ENCODE measurements at regions of chr12 and their contacts with region 1.

Region 1: DNA sequence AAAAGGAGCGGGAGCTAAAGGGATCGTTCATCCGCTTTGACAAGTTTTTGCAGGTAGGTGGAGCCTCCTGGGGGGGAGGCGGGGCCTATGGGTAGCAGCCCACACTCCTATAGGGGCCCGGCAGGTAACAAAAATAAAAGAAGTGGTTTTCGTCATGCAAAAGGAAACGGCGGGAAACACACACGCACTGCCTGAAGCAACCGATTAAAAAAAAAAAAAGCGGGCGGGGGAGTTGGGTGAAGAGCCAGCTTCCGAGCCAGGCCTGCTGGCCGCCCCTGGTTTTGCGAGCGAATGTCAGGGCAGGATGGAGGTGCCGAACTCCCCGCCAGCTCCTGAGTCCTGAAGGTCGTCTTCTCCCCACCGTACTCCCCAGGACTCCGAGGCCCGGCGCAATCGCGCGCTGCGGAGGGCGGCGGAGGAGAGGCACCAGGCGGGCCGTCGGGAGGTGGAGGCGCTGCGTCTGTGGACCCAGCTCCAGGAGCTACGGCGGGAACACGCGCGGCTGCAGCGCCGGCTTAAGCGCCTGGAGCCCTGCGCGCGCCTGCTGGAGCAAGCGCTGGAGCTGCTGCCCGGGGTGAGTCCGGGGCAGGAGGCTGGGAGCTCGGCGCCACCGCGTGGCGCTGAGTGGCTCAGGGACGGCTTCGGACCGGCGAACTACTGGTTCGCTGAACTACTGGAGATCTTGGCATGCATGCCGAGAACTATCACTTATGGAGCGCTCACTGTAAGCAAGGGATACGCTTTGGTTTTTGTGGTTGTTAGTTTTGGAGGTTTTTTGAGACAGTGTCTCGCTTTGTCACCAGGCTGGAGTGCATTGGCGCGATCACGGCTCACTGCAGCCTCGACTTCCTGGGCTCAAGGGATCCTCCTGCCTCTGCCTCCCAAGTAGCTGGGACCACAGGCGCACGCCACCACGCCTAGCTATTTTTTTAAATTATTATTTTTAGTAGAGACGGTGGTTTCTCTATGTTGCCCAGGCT is 3.6 kb downstream of the CFAP73 start:
- DNase-seq: peak; percentile 34 to 88 (median 63)
- ATAC-seq: peak; percentile 94
- H3K4me3 ChIP-seq: peak overlapping the region; percentile 53
- H3K4me3 Mint-ChIP-seq: peak overlapping the region; percentile 89
- H3K27ac ChIP-seq: no peak overlapping the region
- H3K27ac Mint-ChIP-seq: peak overlapping the region; percentile 84
- H3K4me1 ChIP-seq: peaks cover 34% of the 10 kb centered on the region
- H3K4me1 Mint-ChIP-seq: peaks cover 29% of the 10 kb centered on the region
- H3K27me3 ChIP-seq: peaks cover 0 to 2% of the 10 kb centered on the region in 2 experiments
- H3K27me3 Mint-ChIP-seq: no peaks in the 10 kb centered on the region
- CTCF ChIP-seq: no peak

Region 2: DNA sequence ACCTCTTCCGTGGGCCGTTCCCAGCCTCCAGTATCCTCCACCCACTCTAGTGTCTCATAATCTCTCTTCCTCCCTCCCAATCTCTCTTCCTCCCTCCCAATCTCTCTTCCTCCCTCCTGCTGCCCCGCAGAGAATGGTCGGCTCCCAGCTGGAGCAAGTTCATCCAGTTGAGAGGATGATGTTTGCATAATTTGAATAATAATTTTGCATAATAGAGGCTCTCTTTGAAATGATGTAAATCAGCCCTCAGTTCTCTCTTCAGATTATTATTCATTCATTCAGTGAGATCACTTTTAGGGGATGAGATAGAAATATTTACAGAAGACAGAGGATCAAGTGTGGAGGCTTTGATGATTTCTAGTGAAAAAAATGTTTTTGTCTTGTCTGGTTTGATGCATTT is 609.4 kb before region 1 on chr12:
- CTCF ChIA-PET with region 1: no interaction called
- POLR2A ChIA-PET with region 1: no interaction called
- intact Hi-C with region 1: no loop called
- DNase-seq: no peak
- ATAC-seq: no peak
- H3K4me3 ChIP-seq: no peak overlapping the region
- H3K4me3 Mint-ChIP-seq: no peak overlapping the region
- H3K27ac ChIP-seq: no peak overlapping the region
- H3K27ac Mint-ChIP-seq: no peak overlapping the region
- H3K4me1 ChIP-seq: no peaks in the 10 kb centered on the region
- H3K4me1 Mint-ChIP-seq: no peaks in the 10 kb centered on the region
- H3K27me3 ChIP-seq: peaks cover 0 to 4% of the 10 kb centered on the region in 2 experiments
- H3K27me3 Mint-ChIP-seq: peaks cover 23% of the 10 kb centered on the region
- CTCF ChIP-seq: no peak

Region 3: GRCh38 chr12:113016796-113017195 is 136.3 kb before region 1 on chr12:
- CTCF ChIA-PET with region 1: no interaction called
- POLR2A ChIA-PET with region 1: no interaction called
- intact Hi-C with region 1: no loop called
- DNase-seq: no peak
- ATAC-seq: no peak
- H3K4me3 ChIP-seq: no peak overlapping the region
- H3K4me3 Mint-ChIP-seq: no peak overlapping the region
- H3K27ac ChIP-seq: no peak overlapping the region
- H3K27ac Mint-ChIP-seq: no peak overlapping the region
- H3K4me1 ChIP-seq: no peaks in the 10 kb centered on the region
- H3K4me1 Mint-ChIP-seq: no peaks in the 10 kb centered on the region
- H3K27me3 ChIP-seq: no peaks in the 10 kb centered on the region
- H3K27me3 Mint-ChIP-seq: no peaks in the 10 kb centered on the region
- CTCF ChIP-seq: no peak

Region 4: GRCh38 chr12:113048716-113049127 is 104.4 kb before region 1 on chr12:
- CTCF ChIA-PET with region 1: interaction called, 8 read pairs
- POLR2A ChIA-PET with region 1: interaction called, 3 read pairs
- intact Hi-C with region 1: loop called (anchors 2 to 10 kb)
- DNase-seq: peak; percentile 33 to 84 (median 52)
- ATAC-seq: peak; percentile 85
- H3K4me3 ChIP-seq: no peak overlapping the region
- H3K4me3 Mint-ChIP-seq: peak overlapping the region; percentile 51
- H3K27ac ChIP-seq: no peak overlapping the region
- H3K27ac Mint-ChIP-seq: no peak overlapping the region
- H3K4me1 ChIP-seq: peaks cover 14% of the 10 kb centered on the region
- H3K4me1 Mint-ChIP-seq: peaks cover 51% of the 10 kb centered on the region
- H3K27me3 ChIP-seq: no peaks in the 10 kb centered on the region
- H3K27me3 Mint-ChIP-seq: no peaks in the 10 kb centered on the region
- CTCF ChIP-seq: peak; percentile 75

Region 5: DNA sequence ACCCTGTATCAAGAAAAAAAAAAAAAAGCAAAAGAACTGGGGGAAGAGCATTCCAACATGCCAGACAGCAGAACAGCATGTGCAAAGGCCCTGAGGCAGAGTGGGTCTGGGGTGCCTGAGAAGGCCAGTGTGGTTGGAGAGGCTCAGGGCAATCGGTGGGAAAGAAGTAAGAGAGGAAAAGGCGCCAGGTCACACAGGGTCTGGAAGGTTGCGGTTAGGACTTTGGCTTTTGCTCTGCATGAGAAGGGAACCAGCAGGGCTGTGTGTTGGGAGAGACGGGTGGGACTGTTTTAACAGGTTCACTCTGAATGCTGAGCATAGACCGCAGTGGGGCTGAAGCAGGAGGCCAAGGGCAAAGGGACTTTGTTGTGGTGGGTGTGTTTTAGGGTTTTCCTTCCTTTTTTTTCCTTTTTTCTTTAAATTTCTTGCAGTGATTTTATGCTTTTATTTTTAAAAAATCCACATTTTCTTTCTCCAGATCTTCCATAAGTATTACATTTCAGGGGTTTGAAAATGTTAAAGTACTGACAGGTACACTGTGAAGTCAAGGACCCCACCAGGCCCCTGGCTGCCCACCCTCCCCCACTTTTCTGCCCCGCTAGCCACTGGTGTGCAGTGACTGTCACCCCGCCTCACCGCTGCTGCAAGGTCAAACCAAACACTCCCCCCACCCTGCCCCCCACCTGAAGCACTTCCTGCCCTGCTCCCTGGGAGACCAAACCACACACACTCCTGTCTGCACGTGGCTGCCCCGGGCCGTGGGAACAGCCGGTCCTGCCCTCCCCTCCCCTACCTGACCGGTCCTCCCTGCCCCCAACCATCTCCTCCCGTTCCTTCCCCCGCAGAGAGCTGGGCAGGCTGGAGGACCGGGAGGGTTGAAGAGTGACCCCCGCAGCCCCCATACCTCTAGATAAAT is 66.6 kb before region 1 on chr12:
- CTCF ChIA-PET with region 1: no interaction called
- POLR2A ChIA-PET with region 1: no interaction called
- intact Hi-C with region 1: loop called in 1 of 2 experiments (anchors 10 kb)
- DNase-seq: peak in 10 of 14 experiments; percentile 20 to 69 (median 40)
- ATAC-seq: peak; percentile 41
- H3K4me3 ChIP-seq: no peak overlapping the region
- H3K4me3 Mint-ChIP-seq: peak overlapping the region; percentile 82
- H3K27ac ChIP-seq: peak overlapping the region; percentile 42 to 62
- H3K27ac Mint-ChIP-seq: peak overlapping the region; percentile 66
- H3K4me1 ChIP-seq: peaks cover 81% of the 10 kb centered on the region
- H3K4me1 Mint-ChIP-seq: peaks cover 93% of the 10 kb centered on the region
- H3K27me3 ChIP-seq: no peaks in the 10 kb centered on the region
- H3K27me3 Mint-ChIP-seq: no peaks in the 10 kb centered on the region
- CTCF ChIP-seq: no peak

Region 6: DNA sequence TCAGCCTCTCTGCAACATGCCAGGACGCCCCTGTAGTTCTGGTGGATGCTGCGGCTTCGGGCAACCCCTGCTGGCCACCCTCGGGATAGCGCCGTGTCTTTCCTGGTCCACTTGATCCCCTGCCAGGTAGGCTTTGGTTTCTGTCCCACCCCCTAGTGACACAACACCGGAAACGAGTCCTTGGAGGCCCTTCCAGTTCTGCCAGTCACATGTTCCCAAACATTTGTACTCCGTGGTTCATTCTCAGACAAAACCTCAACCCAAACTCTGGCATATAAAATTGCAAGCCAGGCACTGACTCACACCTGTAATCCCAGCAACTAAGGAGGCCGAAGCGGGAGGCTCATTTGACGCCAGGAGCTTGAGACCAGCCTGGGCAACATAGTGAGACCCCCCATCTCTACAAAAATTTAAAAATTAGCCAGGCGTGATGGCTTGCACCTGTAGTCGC is 54.7 kb before region 1 on chr12:
- CTCF ChIA-PET with region 1: no interaction called
- POLR2A ChIA-PET with region 1: no interaction called
- intact Hi-C with region 1: loop called (anchors 1 to 5 kb)
- DNase-seq: peak; percentile 46 to 82 (median 62)
- ATAC-seq: peak; percentile 94
- H3K4me3 ChIP-seq: no peak overlapping the region
- H3K4me3 Mint-ChIP-seq: no peak overlapping the region
- H3K27ac ChIP-seq: no peak overlapping the region
- H3K27ac Mint-ChIP-seq: peak overlapping the region; percentile 45
- H3K4me1 ChIP-seq: peaks cover 38% of the 10 kb centered on the region
- H3K4me1 Mint-ChIP-seq: peaks cover 39% of the 10 kb centered on the region
- H3K27me3 ChIP-seq: no peaks in the 10 kb centered on the region
- H3K27me3 Mint-ChIP-seq: no peaks in the 10 kb centered on the region
- CTCF ChIP-seq: peak; percentile 87

Region 7: GRCh38 chr12:113103756-113104450 is 49.2 kb before region 1 on chr12:
- CTCF ChIA-PET with region 1: no interaction called
- POLR2A ChIA-PET with region 1: no interaction called
- intact Hi-C with region 1: loop called (anchors 1 to 5 kb)
- DNase-seq: peak; percentile 47 to 87 (median 70)
- ATAC-seq: peak; percentile 92
- H3K4me3 ChIP-seq: peak overlapping the region; percentile 58
- H3K4me3 Mint-ChIP-seq: peak overlapping the region; percentile 75
- H3K27ac ChIP-seq: no peak overlapping the region
- H3K27ac Mint-ChIP-seq: peak overlapping the region; percentile 78
- H3K4me1 ChIP-seq: peaks cover 15% of the 10 kb centered on the region
- H3K4me1 Mint-ChIP-seq: peaks cover 18% of the 10 kb centered on the region
- H3K27me3 ChIP-seq: no peaks in the 10 kb centered on the region
- H3K27me3 Mint-ChIP-seq: no peaks in the 10 kb centered on the region
- CTCF ChIP-seq: peak; percentile 30

Region 8: DNA sequence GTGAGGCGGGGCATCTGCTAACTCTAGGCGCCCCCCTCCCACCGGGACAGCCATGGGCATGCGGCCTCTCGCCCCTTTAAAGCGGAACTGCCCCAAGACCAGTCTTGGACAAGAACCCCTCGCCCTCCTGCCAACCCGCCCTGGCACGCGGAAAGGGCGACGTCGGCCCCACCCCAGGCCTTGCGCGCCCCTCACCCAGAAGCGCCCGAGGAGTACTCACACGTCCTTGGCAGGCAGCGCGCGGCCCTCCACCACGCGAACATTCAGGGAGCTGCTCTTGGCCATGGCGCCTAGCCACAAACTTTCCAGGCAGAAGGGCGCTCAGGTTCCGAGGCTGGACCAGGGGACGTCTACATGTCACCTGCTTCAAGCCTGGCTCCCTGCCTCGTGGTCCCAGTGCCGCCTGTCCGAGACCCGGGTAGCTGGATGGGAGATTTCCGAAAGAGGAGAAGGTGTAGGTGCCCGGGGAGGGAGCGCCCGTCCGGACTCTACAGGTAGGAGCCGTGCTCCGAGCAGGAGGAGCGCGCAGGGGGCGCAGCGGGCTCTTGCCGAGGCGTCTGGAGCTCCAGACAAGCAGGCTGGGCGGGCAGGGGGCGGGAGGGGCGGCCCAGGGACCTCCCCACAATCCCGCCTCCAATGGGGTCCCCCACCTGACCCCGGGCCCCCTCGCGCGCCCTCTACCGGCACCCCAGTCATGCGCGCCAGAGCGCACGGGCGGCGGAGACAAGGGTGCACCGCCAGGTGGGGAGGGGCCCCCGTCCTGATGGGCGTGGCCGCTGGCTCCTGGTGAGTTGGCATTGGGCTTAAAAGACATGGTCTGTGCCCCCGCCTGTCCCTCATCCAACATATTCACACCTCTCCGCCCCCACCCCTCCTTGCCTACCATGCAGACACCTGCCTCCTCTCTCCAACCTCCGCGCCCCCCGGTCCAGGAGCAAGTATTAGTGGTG is 17.7 kb before region 1 on chr12 and contains the start of gene RASAL1:
- CTCF ChIA-PET with region 1: interaction called, 12 read pairs
- POLR2A ChIA-PET with region 1: no interaction called
- intact Hi-C with region 1: loop called in 1 of 2 experiments (anchors 1 kb)
- DNase-seq: peak; percentile 58 to 85 (median 76)
- ATAC-seq: peak; percentile 88
- H3K4me3 ChIP-seq: peak within 1 kb of the TSS; percentile 51
- H3K4me3 Mint-ChIP-seq: peak within 1 kb of the TSS; percentile 92
- H3K27ac ChIP-seq: peak within 1 kb of the TSS in 1 of 2 donors; percentile 61
- H3K27ac Mint-ChIP-seq: peak within 1 kb of the TSS; percentile 98
- H3K4me1 ChIP-seq: peaks cover 22% of the 10 kb centered on the region
- H3K4me1 Mint-ChIP-seq: peaks cover 13% of the 10 kb centered on the region
- H3K27me3 ChIP-seq: no peaks in the 10 kb centered on the region
- H3K27me3 Mint-ChIP-seq: no peaks in the 10 kb centered on the region
- CTCF ChIP-seq: peak; percentile 61
- total RNA-seq, gene RASAL1: 1.2 to 2.7 TPM

Region 9: DNA sequence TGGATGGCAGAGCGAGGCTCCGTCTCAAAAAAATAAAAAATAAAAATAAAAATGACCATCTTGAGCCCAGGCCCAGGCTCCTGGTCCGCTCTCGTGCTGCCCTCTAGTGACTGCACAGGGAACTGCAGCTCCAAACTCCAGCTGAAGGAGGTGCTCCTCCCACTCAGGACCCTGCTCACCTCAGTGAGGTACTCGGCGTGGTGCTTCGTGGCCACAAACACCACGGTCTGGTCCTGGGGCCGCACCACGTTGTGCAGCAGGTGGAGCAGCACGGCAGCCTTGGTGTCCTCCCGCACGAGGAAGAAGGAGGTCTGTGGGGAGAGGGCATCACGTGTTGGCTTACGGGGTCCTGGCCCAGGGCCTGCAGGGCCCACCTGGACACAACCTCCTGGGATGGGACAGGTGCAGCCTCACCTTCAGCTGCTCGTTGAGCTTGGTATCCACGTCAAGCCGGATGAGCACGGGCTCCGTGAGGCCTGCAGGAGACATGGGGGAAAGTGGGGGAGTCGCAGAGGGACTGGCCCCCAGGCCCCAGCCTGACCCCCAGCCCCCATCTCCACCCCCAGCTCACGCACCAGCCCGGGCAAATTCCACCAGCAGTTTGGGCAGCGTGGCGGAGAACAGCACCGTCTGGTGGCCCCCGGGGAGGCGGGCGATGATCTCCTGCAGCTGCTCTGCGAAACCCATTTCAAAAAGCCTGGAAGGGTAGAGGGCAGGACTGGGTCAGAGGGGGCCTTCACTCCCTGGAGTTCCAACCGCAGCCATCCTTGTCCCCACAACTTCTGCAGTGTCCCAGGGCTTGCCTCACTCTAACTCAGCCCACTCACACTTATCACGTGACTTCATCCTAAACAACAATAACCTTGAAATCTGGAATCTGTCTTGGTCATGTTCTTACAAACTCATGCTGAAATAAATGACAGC is 21.6 kb after region 1 on chr12:
- CTCF ChIA-PET with region 1: interaction called, 5 read pairs
- POLR2A ChIA-PET with region 1: interaction called, 3 read pairs
- intact Hi-C with region 1: loop called in 1 of 2 experiments (anchors 1 kb)
- DNase-seq: peak; percentile 67 to 84 (median 73)
- ATAC-seq: peak; percentile 87
- H3K4me3 ChIP-seq: no peak overlapping the region
- H3K4me3 Mint-ChIP-seq: no peak overlapping the region
- H3K27ac ChIP-seq: no peak overlapping the region
- H3K27ac Mint-ChIP-seq: no peak overlapping the region
- H3K4me1 ChIP-seq: no peaks in the 10 kb centered on the region
- H3K4me1 Mint-ChIP-seq: no peaks in the 10 kb centered on the region
- H3K27me3 ChIP-seq: no peaks in the 10 kb centered on the region
- H3K27me3 Mint-ChIP-seq: no peaks in the 10 kb centered on the region
- CTCF ChIP-seq: peak; percentile 100

Measured in CD4-positive, alpha-beta T cell (primary cell).